Kidney (tissue), 22 donors: ENCODE measurements at regions of chr12 and their contacts with region 1.

Region 1: GRCh38 chr12:32761716-32762115 is 6.0 kb upstream of the YARS2 start:
- DNase-seq: no peak
- H3K4me3 ChIP-seq: no peak overlapping the region
- H3K27ac ChIP-seq: no peak overlapping the region
- H3K4me1 ChIP-seq: no peaks in the 10 kb centered on the region
- H3K27me3 ChIP-seq: no peaks in the 10 kb centered on the region
- CTCF ChIP-seq: no peak

Region 2: GRCh38 chr12:32605034-32605719 is 156.5 kb before region 1 on chr12:
- intact Hi-C with region 1: no loop called
- DNase-seq: peak in 2 of 5 donors; percentile 38 to 42
- H3K4me3 ChIP-seq: no peak overlapping the region
- H3K27ac ChIP-seq: no peak overlapping the region
- H3K4me1 ChIP-seq: no peaks in the 10 kb centered on the region
- H3K27me3 ChIP-seq: no peaks in the 10 kb centered on the region
- CTCF ChIP-seq: no peak

Region 3: DNA sequence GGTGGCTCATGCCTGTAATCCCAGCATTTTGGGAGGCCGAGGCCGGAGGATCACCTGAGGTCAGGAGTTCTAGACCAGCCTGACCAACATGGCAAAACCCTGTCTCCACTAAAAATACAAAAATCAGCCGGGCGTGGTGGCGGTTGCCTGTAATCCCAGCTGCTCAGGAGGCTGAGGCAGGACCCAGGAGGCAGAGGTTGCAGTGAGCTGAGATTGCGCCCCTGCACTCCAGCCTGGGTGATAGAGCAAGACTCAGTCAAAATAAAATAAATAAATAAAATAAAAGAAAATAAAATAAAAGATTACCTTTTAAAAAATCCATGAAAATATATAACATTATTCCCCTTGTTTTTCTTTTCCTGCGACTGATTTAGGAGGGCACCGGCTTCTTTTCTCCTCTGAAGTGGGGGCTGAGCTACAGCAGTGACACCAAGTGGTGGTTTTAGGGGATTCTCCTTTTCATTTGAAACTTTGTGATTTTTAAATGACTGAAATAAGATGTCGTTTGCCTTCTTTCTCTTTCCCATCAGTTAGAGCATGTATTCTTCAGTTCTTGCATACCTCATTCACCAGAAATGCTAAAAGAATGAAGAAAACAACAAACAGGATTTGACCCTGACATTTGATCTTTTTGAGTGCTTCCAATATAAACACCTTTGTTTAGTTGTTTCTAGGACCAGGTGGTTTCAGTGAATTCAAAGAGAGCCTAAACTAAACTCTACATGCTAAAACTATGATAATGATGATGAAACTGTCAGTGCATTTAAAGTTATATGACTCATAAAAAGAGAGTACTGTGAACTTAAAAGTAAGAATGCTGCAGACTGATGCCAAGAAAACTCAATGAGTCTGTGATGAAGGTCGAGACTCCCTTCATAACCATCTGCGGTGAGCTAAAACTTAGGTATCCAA is 157.4 kb after region 1 on chr12:
- intact Hi-C with region 1: loop called (anchors 10 kb)
- DNase-seq: peak in 3 of 5 donors; percentile 14 to 75 (median 59)
- H3K4me3 ChIP-seq: no peak overlapping the region
- H3K27ac ChIP-seq: no peak overlapping the region
- H3K4me1 ChIP-seq: no peaks in the 10 kb centered on the region
- H3K27me3 ChIP-seq: no peaks in the 10 kb centered on the region
- CTCF ChIP-seq: peak; percentile 57

Region 4: DNA sequence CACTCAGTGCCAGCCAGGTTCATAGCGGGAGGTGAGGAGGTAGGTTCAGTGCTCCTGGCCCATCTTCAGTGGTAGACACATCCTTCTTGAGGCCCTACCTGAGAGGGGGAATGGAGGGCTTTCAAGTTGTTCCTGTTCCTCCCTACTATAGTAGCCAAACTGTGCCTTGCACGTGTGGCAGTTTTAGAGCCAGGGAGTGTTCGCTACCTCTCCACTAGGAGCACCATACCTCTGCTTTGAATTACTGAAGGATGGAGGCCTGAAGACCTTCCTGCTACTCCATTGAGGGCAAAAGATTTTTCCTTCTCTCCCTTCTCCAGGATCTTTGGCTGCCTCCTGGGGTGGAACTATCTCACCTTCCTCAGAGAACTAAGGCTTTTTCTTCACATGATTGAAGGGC is 1254.6 kb after region 1 on chr12:
- intact Hi-C with region 1: loop called (anchors 10 kb)
- DNase-seq: no peak
- H3K4me3 ChIP-seq: no peak overlapping the region
- H3K27ac ChIP-seq: no peak overlapping the region
- H3K4me1 ChIP-seq: no peaks in the 10 kb centered on the region
- H3K27me3 ChIP-seq: no peaks in the 10 kb centered on the region
- CTCF ChIP-seq: no peak